Activated T-helper 1 cell treated with anti-CD3 and anti-CD28 coated beads, Interleukin-12 subunit alpha, Interleukin-12 subunit beta, Interleukin-2, Interleukin-4 antibody, amounts not matched to agents 30 ng/mL and 10 ng/mL and 1 ng/mL, durations not matched to agents 14 hours and 24 hours and 36 hours (primary cell): ENCODE measurements at regions of chr3 and their contacts with region 1.

Region 1: GRCh38 chr3:52231502-52232293 is 6.3 kb upstream of the TLR9 start:
- DNase-seq: peak; percentile 73
- H3K4me3 Mint-ChIP-seq: no peak overlapping the region
- H3K27ac Mint-ChIP-seq: peak overlapping the region; percentile 42
- H3K4me1 Mint-ChIP-seq: peaks cover 38% of the 10 kb centered on the region
- H3K27me3 Mint-ChIP-seq: no peaks in the 10 kb centered on the region

Region 2: DNA sequence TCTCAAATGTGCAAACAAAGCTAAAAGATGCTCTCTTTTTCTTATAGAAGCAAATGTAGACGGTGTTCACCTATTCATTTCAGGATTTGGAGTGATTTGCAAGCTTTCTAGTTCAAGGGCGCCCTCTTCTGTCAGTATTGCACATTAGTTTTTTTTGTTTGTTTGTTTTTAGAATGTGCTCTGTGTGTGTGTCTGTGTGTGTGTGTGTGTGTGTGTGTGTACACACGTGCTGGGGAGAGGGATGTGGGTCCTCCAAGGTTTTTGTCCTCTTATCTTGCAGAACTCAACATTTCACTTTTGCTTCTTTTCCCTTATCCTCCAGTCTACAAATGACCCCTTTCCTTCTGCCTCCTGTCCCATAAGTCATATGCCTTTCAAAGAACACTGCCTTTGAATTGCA is 107.9 kb after region 1 on chr3:
- intact Hi-C with region 1: loop called (anchors 1 kb)
- DNase-seq: peak; percentile 40
- H3K4me3 Mint-ChIP-seq: no peak overlapping the region
- H3K27ac Mint-ChIP-seq: no peak overlapping the region
- H3K4me1 Mint-ChIP-seq: no peaks in the 10 kb centered on the region
- H3K27me3 Mint-ChIP-seq: no peaks in the 10 kb centered on the region

Region 3: GRCh38 chr3:52820736-52821135 is 589.0 kb after region 1 on chr3:
- intact Hi-C with region 1: no loop called
- DNase-seq: no peak
- H3K4me3 Mint-ChIP-seq: no peak overlapping the region
- H3K27ac Mint-ChIP-seq: no peak overlapping the region
- H3K4me1 Mint-ChIP-seq: no peaks in the 10 kb centered on the region
- H3K27me3 Mint-ChIP-seq: no peaks in the 10 kb centered on the region